ENCODE measurements at regions of chr4 and their contacts with region 1.

Region 1: DNA sequence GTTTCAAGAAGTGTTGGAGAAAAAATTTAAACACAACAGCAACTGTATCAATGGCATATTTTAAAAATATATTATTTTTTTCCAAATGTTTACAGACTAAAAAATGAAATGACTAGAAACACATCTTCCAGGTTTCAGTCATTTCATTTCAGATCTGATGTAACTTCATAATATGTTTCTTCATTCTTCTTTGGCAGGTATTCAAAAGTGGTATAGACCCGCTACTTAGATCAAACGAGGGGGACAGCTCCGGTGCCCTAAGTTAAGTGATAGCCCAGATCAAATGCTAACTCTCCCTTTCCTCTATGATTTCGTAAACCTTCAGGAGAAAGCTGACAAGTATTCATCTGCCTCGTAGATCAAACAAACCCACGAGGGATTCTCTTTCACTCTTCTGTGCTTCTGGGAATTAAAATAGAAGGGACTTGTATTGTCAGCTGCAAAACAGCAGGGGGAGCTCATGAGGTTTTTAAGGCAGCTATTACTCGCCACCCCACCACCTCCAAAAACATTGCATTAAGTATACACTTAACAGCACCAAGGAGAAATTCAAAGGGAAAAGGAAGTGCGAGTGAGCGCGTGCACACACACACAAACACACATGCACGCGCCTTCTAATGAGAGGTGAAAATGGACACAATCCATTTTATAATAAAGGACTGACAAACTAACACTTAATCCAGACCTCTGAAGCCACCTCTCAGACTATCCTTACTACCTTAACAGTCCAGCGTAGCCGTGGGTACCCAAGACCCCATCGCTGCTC is 21.4 kb downstream of the HELT start:
- DNase-seq: peak; percentile 53
- H3K4me3 Mint-ChIP-seq: peak overlapping the region; percentile 23
- H3K27ac Mint-ChIP-seq: no peak overlapping the region
- H3K4me1 Mint-ChIP-seq: peaks cover 4% of the 10 kb centered on the region
- H3K27me3 Mint-ChIP-seq: peaks cover 15% of the 10 kb centered on the region

Region 2: GRCh38 chr4:184838249-184839074 is 201.2 kb before region 1 on chr4:
- CTCF ChIA-PET with region 1: no interaction called
- POLR2A ChIA-PET with region 1: no interaction called
- DNase-seq: no peak
- H3K4me3 Mint-ChIP-seq: no peak overlapping the region
- H3K27ac Mint-ChIP-seq: no peak overlapping the region
- H3K4me1 Mint-ChIP-seq: peaks cover 7% of the 10 kb centered on the region
- H3K27me3 Mint-ChIP-seq: peaks cover 20% of the 10 kb centered on the region

Region 3: DNA sequence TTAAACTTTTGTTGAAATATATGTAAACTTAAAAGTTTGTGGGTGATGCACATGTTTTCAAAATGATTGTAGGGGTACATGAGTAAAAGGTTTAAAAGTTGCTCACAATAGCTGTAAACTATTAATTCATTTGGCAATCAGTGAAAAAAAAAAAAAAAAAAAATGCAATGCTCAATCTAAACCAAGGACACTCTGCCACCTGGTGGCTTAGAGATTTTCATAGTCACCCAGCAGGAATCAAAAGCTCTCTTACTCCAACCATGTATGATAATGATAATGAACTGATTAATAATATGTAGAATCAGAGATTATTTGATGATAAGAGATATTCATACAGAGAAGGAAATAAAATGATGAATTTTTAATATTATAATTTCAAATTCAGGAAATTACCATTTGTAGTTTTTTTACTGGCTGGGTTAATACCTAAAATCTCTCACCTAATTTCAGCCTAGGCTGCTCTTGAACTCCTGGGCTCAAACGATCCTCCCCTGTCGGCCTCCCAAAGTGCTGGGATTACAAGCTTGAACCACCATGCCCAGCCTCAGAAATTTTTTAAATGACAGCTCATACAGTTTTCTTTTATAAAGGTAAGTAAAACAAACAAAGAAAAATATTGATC is 56.5 kb after region 1 on chr4:
- CTCF ChIA-PET with region 1: interaction called, 37 read pairs
- POLR2A ChIA-PET with region 1: no interaction called
- DNase-seq: no peak
- H3K4me3 Mint-ChIP-seq: no peak overlapping the region
- H3K27ac Mint-ChIP-seq: no peak overlapping the region
- H3K4me1 Mint-ChIP-seq: no peaks in the 10 kb centered on the region
- H3K27me3 Mint-ChIP-seq: peaks cover 17% of the 10 kb centered on the region

Region 4: DNA sequence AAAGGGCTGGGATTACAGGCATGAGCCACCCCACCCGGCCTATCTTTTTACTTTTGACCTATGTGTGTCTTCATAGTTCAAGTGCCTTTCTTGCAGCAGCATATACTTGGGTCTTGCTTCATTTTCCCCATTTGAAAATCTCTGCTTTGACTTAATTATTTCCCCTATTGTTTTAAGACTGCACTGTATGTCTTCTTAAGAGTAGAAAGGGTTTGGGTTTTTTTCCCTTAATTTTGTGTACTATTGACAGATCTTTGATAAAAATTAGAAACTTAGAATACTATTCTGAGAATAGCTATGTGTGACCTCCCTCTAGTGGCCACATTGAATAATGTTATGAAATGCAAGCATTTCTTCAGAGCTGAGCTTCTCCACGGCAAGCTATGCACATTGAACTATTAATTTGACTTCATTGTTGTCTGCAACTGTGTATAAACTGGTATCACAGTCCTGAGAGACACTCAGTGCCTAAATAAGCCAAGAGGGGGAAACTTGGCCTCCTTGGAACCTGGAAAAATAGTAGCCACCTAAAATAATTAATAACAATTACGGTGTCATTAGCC is 94.7 kb after region 1 on chr4:
- CTCF ChIA-PET with region 1: interaction called, 45 read pairs
- POLR2A ChIA-PET with region 1: no interaction called
- DNase-seq: no peak
- H3K4me3 Mint-ChIP-seq: no peak overlapping the region
- H3K27ac Mint-ChIP-seq: no peak overlapping the region
- H3K4me1 Mint-ChIP-seq: no peaks in the 10 kb centered on the region
- H3K27me3 Mint-ChIP-seq: peaks cover 29% of the 10 kb centered on the region

Measured in activated CD4-positive, alpha-beta memory T cell treated with anti-CD3 and anti-CD28 coated beads, Interleukin-2, amount 10 ng/mL, durations not matched to agents 7 days and 5 days (primary cell).